Mammary epithelial cell (primary cell): ENCODE measurements at regions of chr7 and their contacts with region 1.

Region 1: GRCh38 chr7:80428161-80429054 is 83.5 kb downstream of the GNAT3 start:
- DNase-seq: peak; percentile 62
- H3K4me3 ChIP-seq: no peak overlapping the region
- H3K27ac ChIP-seq: no peak overlapping the region
- H3K4me1 ChIP-seq: no peaks in the 10 kb centered on the region
- H3K27me3 ChIP-seq: no peaks in the 10 kb centered on the region
- CTCF ChIP-seq: peak; percentile 48 to 74

Region 2: GRCh38 chr7:80453699-80454340 is 25.4 kb after region 1 on chr7:
- CTCF ChIA-PET with region 1: no interaction called
- dilution Hi-C with region 1: no loop called
- in situ Hi-C with region 1: no loop called
- intact Hi-C with region 1: loop called (anchors 1 kb)
- DNase-seq: no peak
- H3K4me3 ChIP-seq: no peak overlapping the region
- H3K27ac ChIP-seq: no peak overlapping the region
- H3K4me1 ChIP-seq: peaks cover 4% of the 10 kb centered on the region
- H3K27me3 ChIP-seq: no peaks in the 10 kb centered on the region
- CTCF ChIP-seq: peak; percentile 38 to 39

Region 3: GRCh38 chr7:80467069-80467468 is 38.7 kb after region 1 on chr7:
- CTCF ChIA-PET with region 1: no interaction called
- dilution Hi-C with region 1: no loop called
- in situ Hi-C with region 1: no loop called
- intact Hi-C with region 1: no loop called
- DNase-seq: no peak
- H3K4me3 ChIP-seq: no peak overlapping the region
- H3K27ac ChIP-seq: no peak overlapping the region
- H3K4me1 ChIP-seq: no peaks in the 10 kb centered on the region
- H3K27me3 ChIP-seq: no peaks in the 10 kb centered on the region
- CTCF ChIP-seq: no peak

Region 4: GRCh38 chr7:80499350-80499953 is 71.0 kb after region 1 on chr7:
- CTCF ChIA-PET with region 1: no interaction called
- dilution Hi-C with region 1: no loop called
- in situ Hi-C with region 1: no loop called
- intact Hi-C with region 1: loop called (anchors 5 kb)
- DNase-seq: peak; percentile 95
- H3K4me3 ChIP-seq: peak overlapping the region in 2 of 3 experiments; percentile 19 to 32
- H3K27ac ChIP-seq: peak overlapping the region; percentile 100
- H3K4me1 ChIP-seq: peaks cover 11% of the 10 kb centered on the region
- H3K27me3 ChIP-seq: no peaks in the 10 kb centered on the region
- CTCF ChIP-seq: no peak

Region 5: GRCh38 chr7:80659120-80660055 is 231.0 kb after region 1 on chr7:
- CTCF ChIA-PET with region 1: interaction called, 3 read pairs
- dilution Hi-C with region 1: no loop called
- in situ Hi-C with region 1: loop called (anchors 10 kb)
- intact Hi-C with region 1: loop called (anchors 1 kb)
- DNase-seq: peak; percentile 20
- H3K4me3 ChIP-seq: no peak overlapping the region
- H3K27ac ChIP-seq: no peak overlapping the region
- H3K4me1 ChIP-seq: no peaks in the 10 kb centered on the region
- H3K27me3 ChIP-seq: no peaks in the 10 kb centered on the region
- CTCF ChIP-seq: peak; percentile 61 to 64

Region 6: GRCh38 chr7:80681272-80681885 is 253.0 kb after region 1 on chr7:
- CTCF ChIA-PET with region 1: no interaction called
- dilution Hi-C with region 1: no loop called
- in situ Hi-C with region 1: no loop called
- intact Hi-C with region 1: loop called (anchors 1 kb)
- DNase-seq: peak; percentile 21
- H3K4me3 ChIP-seq: no peak overlapping the region
- H3K27ac ChIP-seq: no peak overlapping the region
- H3K4me1 ChIP-seq: no peaks in the 10 kb centered on the region
- H3K27me3 ChIP-seq: no peaks in the 10 kb centered on the region
- CTCF ChIP-seq: peak; percentile 54 to 68

Region 7: DNA sequence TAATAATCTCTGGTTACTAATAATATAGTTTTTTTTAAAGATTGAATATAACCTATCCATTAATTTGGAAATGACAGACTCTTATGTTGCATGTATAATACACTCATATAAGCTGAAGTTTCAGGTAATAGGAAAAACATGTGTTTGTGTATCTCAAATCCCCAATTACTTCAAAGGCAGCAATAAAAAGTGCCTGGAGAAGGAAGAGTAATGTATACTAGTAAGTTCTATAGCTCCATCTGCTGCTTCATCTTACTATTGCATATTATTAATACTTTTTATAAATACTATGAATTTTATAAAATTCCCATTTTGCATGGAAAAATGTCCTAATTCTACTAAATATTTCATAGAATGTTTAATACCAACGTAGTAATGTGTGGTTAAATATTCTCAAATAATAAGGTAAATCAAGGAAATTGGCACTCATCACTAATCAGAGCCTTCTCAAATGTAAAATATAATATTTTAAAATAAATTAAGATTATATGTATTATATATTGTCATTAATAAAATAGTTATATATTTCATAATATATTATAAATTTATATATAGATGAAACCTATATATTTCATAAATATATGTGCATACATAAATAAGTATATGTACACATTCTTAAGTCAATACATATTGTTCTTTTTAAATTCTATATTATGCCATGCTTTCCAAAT is 1029.6 kb after region 1 on chr7:
- CTCF ChIA-PET with region 1: no interaction called
- dilution Hi-C with region 1: no loop called
- in situ Hi-C with region 1: loop called in 1 of 2 experiments (anchors 25 kb)
- intact Hi-C with region 1: loop called (anchors 10 kb)
- DNase-seq: no peak
- H3K4me3 ChIP-seq: no peak overlapping the region
- H3K27ac ChIP-seq: no peak overlapping the region
- H3K4me1 ChIP-seq: no peaks in the 10 kb centered on the region
- H3K27me3 ChIP-seq: no peaks in the 10 kb centered on the region
- CTCF ChIP-seq: peak; percentile 43 to 61

Region 8: DNA sequence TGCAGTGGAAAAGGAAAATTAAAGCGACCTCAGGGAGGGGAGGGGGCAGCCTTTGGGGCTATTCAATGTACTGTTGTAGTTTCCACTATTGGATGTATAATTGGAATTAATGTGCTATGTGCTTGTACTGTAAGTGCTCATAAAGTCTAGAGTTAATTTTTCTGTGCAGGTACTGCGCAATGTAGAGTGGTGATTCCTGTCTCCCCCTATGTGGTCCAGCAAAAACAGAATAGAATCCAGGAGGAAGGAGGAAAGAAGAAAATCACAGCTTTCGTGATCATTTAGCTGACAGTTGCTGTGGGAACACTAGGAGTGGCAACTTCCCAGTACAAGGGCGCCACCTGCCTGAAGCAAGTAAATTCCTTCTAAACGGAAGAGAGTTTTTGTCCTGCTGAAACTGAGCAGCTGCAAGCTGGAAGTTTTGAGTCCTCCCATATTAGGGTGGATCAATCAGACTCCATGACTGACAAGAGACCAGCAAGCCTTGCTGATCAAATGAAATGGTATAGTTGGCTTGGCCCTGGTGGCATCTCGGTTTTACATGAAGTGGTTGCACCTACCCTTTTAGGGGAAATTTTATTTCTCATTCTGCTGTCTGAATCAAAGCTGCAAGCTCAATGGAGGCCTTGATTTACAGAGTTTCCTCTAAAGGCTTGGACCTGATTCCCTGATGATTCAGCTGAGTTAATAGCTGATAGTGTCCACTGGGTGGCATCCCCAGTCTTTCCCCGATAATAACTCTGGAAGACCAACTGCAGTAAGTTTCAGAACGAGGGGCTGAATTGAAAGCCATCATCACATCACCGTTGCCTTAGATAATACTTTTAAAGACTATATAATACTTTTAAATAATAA is 1041.7 kb after region 1 on chr7:
- CTCF ChIA-PET with region 1: no interaction called
- dilution Hi-C with region 1: no loop called
- in situ Hi-C with region 1: loop called in 1 of 2 experiments (anchors 25 kb)
- intact Hi-C with region 1: loop called (anchors 5 kb)
- DNase-seq: peak; percentile 51
- H3K4me3 ChIP-seq: no peak overlapping the region
- H3K27ac ChIP-seq: no peak overlapping the region
- H3K4me1 ChIP-seq: peaks cover 2% of the 10 kb centered on the region
- H3K27me3 ChIP-seq: no peaks in the 10 kb centered on the region
- CTCF ChIP-seq: peak; percentile 70 to 82